Dendritic cell treated with granulocyte-macrophage colony-stimulating factor and Interleukin-4, amounts not matched to agents 40 ng/mL and 50 ng/mL, for 4 days (primary cell): ENCODE measurements at regions of chr11 and their contacts with region 1.

Region 1: GRCh38 chr11:2945031-2945756 is 16.0 kb upstream of the PHLDA2 start:
- H3K4me3 Mint-ChIP-seq: peak overlapping the region; percentile 31
- H3K27ac Mint-ChIP-seq: peak overlapping the region; percentile 4
- H3K4me1 Mint-ChIP-seq: peaks cover 55% of the 10 kb centered on the region
- H3K27me3 Mint-ChIP-seq: no peaks in the 10 kb centered on the region

Region 2: GRCh38 chr11:2860636-2861035 is 84.6 kb before region 1 on chr11:
- intact Hi-C with region 1: no loop called
- H3K4me3 Mint-ChIP-seq: no peak overlapping the region
- H3K27ac Mint-ChIP-seq: no peak overlapping the region
- H3K4me1 Mint-ChIP-seq: no peaks in the 10 kb centered on the region
- H3K27me3 Mint-ChIP-seq: peaks cover 57% of the 10 kb centered on the region

Region 3: DNA sequence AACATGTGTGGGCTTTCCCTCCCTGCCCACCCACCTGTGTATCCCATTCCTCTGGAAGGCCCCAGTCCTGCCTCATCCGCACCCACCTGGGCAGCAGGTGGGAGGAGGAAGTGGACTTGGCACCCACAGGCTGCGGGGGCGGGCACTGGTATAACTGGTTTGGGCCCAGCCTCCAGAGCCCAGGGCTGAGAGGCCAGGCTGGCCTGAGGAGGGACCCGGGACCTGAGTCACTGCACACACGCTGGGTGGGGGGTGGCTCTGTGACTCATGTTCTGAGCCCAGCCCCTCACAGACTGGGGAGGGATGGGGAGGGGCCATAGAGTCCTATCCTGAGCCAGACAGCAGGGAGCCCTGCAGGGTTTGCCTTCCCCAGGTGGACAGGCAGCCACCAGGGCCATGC is 32.7 kb before region 1 on chr11:
- intact Hi-C with region 1: no loop called
- H3K4me3 Mint-ChIP-seq: no peak overlapping the region
- H3K27ac Mint-ChIP-seq: no peak overlapping the region
- H3K4me1 Mint-ChIP-seq: peaks cover 6% of the 10 kb centered on the region
- H3K27me3 Mint-ChIP-seq: peaks cover 50% of the 10 kb centered on the region

Region 4: GRCh38 chr11:2987881-2988861 is 43.0 kb after region 1 on chr11:
- intact Hi-C with region 1: loop called (anchors 5 kb)
- H3K4me3 Mint-ChIP-seq: peak overlapping the region; percentile 20
- H3K27ac Mint-ChIP-seq: peak overlapping the region; percentile 12
- H3K4me1 Mint-ChIP-seq: peaks cover 48% of the 10 kb centered on the region
- H3K27me3 Mint-ChIP-seq: no peaks in the 10 kb centered on the region